ENCODE measurements at regions of chr3 and their contacts with region 1.

Region 1: GRCh38 chr3:118884748-118885206 is 149.9 kb downstream of the IGSF11 start:
- DNase-seq: peak; percentile 37 to 87
- H3K4me3 ChIP-seq: no peak overlapping the region
- H3K4me1 ChIP-seq: no peaks in the 10 kb centered on the region
- H3K27me3 ChIP-seq: peaks cover 21% of the 10 kb centered on the region

Region 2: DNA sequence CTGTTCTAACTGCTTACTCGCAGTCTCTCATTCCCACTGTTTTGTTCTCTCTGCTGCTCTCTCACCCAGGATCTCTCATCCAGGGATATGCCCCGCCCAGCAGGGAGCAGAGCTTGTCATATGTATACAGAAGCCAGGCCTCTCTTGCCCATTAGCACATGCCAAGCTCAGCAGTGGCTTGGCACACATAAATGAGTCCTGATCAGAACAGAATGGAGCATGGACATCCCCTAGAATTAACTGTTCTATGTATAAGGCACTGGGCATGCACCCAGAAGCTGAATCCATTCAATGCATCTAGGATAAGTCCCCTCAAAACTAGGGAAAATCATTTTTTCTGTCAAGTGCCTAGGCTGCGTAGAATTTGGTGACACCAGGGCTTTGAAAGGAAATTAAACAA is 88.3 kb after region 1 on chr3:
- in situ Hi-C with region 1: no loop called
- DNase-seq: no peak
- H3K4me3 ChIP-seq: no peak overlapping the region
- H3K4me1 ChIP-seq: peaks cover 8% of the 10 kb centered on the region
- H3K27me3 ChIP-seq: no peaks in the 10 kb centered on the region

Region 3: DNA sequence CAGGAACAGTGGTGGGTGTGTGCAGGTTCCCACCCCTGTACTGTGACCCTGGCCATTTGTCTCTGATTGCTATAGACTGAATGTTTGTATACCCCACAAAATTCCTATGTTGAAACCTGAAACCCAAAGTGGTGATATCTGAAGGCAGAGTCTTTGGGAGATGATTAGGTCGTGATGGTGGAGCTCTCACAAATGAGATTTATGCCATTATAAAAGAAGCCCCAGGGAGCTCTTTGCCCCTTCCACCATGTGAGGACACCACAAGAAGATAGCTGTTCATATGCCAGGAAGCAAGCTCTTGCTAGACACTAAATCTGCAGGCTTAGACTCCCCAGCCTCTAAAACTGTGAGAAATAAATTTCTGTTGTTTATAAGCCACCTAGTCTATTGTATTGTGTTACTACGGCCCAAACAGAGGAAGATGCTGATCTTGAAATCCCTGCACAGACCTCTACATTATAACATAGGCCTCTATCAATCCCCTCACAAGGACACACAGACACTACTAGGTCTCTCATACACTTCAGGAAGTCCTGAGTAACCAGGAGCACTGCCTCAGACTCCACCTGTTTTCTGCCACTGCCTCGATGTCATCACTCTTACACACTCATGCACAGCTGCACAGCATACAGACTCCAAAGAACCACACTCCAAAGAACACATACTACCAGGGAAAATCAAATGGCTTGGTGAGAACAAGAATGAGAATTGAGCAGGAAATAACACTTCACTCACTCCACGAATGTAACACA is 135.2 kb after region 1 on chr3:
- in situ Hi-C with region 1: no loop called
- DNase-seq: no peak
- H3K4me3 ChIP-seq: no peak overlapping the region
- H3K4me1 ChIP-seq: peaks cover 54% of the 10 kb centered on the region
- H3K27me3 ChIP-seq: no peaks in the 10 kb centered on the region

Region 4: GRCh38 chr3:119034256-119035013 is 149.7 kb after region 1 on chr3 and contains the start of gene IGSF11:
- in situ Hi-C with region 1: loop called (anchors 10 kb)
- DNase-seq: peak; percentile 76 to 87
- H3K4me3 ChIP-seq: peak within 1 kb of the TSS; percentile 67
- H3K4me1 ChIP-seq: peaks cover 4% of the 10 kb centered on the region
- H3K27me3 ChIP-seq: no peaks in the 10 kb centered on the region

Region 5: GRCh38 chr3:119099785-119100184 is 215.0 kb after region 1 on chr3:
- in situ Hi-C with region 1: loop called (anchors 5 kb)
- DNase-seq: no peak
- H3K4me3 ChIP-seq: no peak overlapping the region
- H3K4me1 ChIP-seq: no peaks in the 10 kb centered on the region
- H3K27me3 ChIP-seq: no peaks in the 10 kb centered on the region

Region 6: GRCh38 chr3:119257682-119258410 is 373.1 kb after region 1 on chr3:
- in situ Hi-C with region 1: no loop called
- DNase-seq: no peak
- H3K4me3 ChIP-seq: no peak overlapping the region
- H3K4me1 ChIP-seq: peaks cover 17% of the 10 kb centered on the region
- H3K27me3 ChIP-seq: no peaks in the 10 kb centered on the region

Region 7: GRCh38 chr3:119676771-119677640 is 792.2 kb after region 1 on chr3 and contains the start of gene COX17:
- in situ Hi-C with region 1: loop called (anchors 25 kb)
- DNase-seq: peak; percentile 94
- H3K4me3 ChIP-seq: peak within 1 kb of the TSS; percentile 56
- H3K4me1 ChIP-seq: peaks cover 5% of the 10 kb centered on the region; the same call in 1 of the 2 replicates
- H3K27me3 ChIP-seq: no peaks in the 10 kb centered on the region

Measured in HAP-1 (cell line).